HepG2 (cell line): ENCODE measurements at regions of chr11 and their contacts with region 1.

Region 1: GRCh38 chr11:58567889-58568512 is 7.7 kb downstream of the LPXN start:
- DNase-seq: peak; percentile 49
- ATAC-seq: peak; percentile 94
- H3K4me3 ChIP-seq: no peak overlapping the region
- H3K27ac ChIP-seq: no peak overlapping the region
- H3K4me1 ChIP-seq: peaks cover 8% of the 10 kb centered on the region
- H3K27me3 ChIP-seq: no peaks in the 10 kb centered on the region
- CTCF ChIP-seq: peak; percentile 67
- EP300 ChIP-seq: no peak
- POLR2A ChIP-seq: no peak
- RAD21 ChIP-seq: 0 out of 2 replicates have a peak, but pooled peaks have one; percentile 18

Region 2: GRCh38 chr11:58629857-58630256 is 61.9 kb after region 1 on chr11:
- CTCF ChIA-PET with region 1: interaction called, 8 read pairs
- POLR2A ChIA-PET with region 1: no interaction called
- in situ Hi-C with region 1: loop called (anchors 10 kb)
- intact Hi-C with region 1: no loop called
- DNase-seq: peak; percentile 60
- ATAC-seq: peak; percentile 78
- H3K4me3 ChIP-seq: no peak overlapping the region
- H3K27ac ChIP-seq: no peak overlapping the region
- H3K4me1 ChIP-seq: no peaks in the 10 kb centered on the region
- H3K27me3 ChIP-seq: no peaks in the 10 kb centered on the region
- CTCF ChIP-seq: peak; percentile 69
- EP300 ChIP-seq: no peak
- POLR2A ChIP-seq: no peak
- RAD21 ChIP-seq: no peak